ENCODE measurements at regions of chr12 and their contacts with region 1.

Region 1: DNA sequence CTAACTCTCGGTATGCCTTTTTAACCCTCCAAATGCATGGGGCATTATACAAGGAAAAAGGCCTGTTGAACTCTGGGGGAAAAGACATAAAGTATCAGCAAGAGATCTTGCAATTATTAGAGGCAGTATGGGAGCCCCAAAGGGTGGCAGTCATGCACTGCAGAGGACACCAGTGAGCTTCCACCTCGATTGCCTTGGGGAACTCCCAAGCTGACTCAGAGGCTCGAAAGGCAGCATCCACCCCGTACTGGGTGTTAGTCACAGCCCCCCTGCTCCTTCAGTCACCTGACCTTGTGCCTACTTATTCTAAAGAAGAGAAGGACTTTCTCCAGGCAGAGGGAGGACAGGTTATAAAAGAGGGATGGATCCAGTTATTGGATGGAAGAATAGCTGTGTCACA is 781.4 kb upstream of the TMEM132C start:
- DNase-seq: peak; percentile 88
- H3K4me3 Mint-ChIP-seq: no peak overlapping the region
- H3K27ac Mint-ChIP-seq: no peak overlapping the region
- H3K4me1 Mint-ChIP-seq: no peaks in the 10 kb centered on the region
- H3K27me3 Mint-ChIP-seq: no peaks in the 10 kb centered on the region
- CTCF ChIP-seq: peak; percentile 31

Region 2: GRCh38 chr12:127455347-127456265 is 29.9 kb before region 1 on chr12:
- CTCF ChIA-PET with region 1: no interaction called
- POLR2A ChIA-PET with region 1: no interaction called
- intact Hi-C with region 1: no loop called
- DNase-seq: no peak
- H3K4me3 Mint-ChIP-seq: no peak overlapping the region
- H3K27ac Mint-ChIP-seq: no peak overlapping the region
- H3K4me1 Mint-ChIP-seq: no peaks in the 10 kb centered on the region
- H3K27me3 Mint-ChIP-seq: no peaks in the 10 kb centered on the region
- CTCF ChIP-seq: no peak

Region 3: DNA sequence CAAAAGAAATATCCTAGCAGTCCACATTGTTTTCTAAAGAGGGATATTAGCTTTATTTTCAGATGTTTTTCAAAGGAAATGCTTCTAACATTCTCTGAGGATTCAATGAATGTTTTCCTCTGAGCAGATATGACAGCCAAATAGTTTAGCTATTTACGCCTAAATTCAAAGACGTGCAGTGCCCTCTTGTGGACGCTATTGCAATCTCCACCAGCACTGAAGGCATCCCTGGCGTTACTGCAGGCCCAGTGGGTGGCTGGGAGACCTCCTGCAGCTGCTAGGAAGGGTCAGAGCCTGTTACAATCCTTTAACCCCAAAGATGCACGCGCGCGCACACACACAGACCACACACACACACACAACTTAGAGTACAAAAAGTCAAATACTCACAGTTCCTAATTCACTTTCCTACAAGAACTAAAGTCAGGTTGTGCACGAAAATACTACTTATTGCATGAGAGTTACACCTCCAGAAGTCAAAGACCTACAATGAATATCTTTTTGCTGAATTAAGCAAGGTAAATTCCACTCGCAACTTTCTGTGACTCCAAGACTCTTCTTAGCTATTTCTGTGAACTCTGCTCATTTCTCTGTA is 192.1 kb after region 1 on chr12:
- CTCF ChIA-PET with region 1: interaction called, 8 read pairs
- POLR2A ChIA-PET with region 1: no interaction called
- intact Hi-C with region 1: loop called (anchors 1 kb)
- DNase-seq: peak; percentile 75
- H3K4me3 Mint-ChIP-seq: no peak overlapping the region
- H3K27ac Mint-ChIP-seq: no peak overlapping the region
- H3K4me1 Mint-ChIP-seq: no peaks in the 10 kb centered on the region
- H3K27me3 Mint-ChIP-seq: no peaks in the 10 kb centered on the region
- CTCF ChIP-seq: peak; percentile 53

Region 4: DNA sequence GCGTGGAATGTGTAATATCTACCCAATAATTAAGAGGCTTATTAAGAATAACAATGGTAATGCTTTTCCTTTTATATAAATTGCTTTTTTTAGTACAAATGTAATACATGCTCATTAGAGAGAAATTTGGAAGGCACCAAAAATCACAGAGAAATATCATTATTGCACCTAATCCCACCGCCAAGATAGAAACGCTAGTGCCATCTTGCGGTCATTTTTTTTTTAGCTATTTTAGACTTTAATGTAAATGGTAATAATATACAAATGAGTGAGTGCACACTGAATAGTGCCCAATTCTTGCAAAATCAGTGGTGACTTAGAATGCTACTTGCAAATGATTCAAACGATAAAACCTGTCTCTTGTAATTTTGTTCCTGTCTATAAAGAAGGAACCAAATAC is 204.6 kb after region 1 on chr12:
- CTCF ChIA-PET with region 1: no interaction called
- POLR2A ChIA-PET with region 1: no interaction called
- intact Hi-C with region 1: loop called (anchors 5 kb)
- DNase-seq: peak; percentile 21
- H3K4me3 Mint-ChIP-seq: no peak overlapping the region
- H3K27ac Mint-ChIP-seq: no peak overlapping the region
- H3K4me1 Mint-ChIP-seq: no peaks in the 10 kb centered on the region
- H3K27me3 Mint-ChIP-seq: no peaks in the 10 kb centered on the region
- CTCF ChIP-seq: peak; percentile 29

Measured in MCF 10A (cell line).